Dendritic cell treated with granulocyte-macrophage colony-stimulating factor and Interleukin-4, amounts not matched to agents 40 ng/mL and 50 ng/mL, for 4 days (primary cell): ENCODE measurements at regions of chr10 and their contacts with region 1.

Region 1: DNA sequence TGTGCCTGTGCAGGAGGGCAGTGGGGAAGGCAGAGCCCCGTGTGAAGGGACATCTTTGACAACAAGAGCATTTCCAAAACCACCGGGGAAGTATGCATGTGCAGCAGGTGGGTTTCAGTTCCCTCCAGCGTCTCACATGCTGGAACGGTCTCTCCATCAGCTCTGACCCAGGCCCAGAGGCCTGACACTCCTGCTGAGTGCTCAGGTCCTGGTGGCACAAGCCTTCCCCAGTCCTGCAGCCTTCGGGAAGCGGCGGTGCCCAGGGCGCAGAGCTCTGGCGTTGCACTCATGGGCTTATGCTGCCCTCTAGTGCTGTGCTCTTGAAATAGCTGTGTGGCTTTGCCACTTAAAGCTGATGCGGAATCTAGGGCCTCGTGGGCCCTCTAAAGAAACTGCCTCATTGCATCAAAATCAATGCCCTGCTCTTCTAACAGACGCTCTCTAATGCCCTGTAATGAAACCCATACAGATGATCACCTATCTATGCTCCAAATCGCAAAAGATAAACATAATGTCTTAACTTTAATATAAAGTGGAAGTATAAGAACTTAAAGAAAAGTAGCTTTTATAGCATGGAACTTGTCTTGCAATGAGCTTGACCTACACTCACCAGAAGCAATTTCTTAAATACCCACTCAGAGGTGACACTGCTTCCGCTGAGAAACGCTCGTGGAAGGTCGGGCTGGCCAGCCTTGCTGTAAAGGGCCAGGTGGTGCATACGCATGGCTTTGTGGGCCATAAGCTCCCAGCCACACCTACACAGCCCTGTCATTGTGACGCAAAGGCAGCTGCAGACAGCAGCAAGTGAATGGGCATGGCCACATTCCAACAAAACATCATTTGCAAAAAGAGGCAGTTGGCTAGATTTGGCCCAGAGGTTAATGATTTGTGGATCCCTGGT is 38.6 kb downstream of the CLRN3 start:
- H3K4me3 Mint-ChIP-seq: no peak overlapping the region
- H3K27ac Mint-ChIP-seq: peak overlapping the region; percentile 63
- H3K4me1 Mint-ChIP-seq: peaks cover 31% of the 10 kb centered on the region
- H3K27me3 Mint-ChIP-seq: peaks cover 19% of the 10 kb centered on the region

Region 2: DNA sequence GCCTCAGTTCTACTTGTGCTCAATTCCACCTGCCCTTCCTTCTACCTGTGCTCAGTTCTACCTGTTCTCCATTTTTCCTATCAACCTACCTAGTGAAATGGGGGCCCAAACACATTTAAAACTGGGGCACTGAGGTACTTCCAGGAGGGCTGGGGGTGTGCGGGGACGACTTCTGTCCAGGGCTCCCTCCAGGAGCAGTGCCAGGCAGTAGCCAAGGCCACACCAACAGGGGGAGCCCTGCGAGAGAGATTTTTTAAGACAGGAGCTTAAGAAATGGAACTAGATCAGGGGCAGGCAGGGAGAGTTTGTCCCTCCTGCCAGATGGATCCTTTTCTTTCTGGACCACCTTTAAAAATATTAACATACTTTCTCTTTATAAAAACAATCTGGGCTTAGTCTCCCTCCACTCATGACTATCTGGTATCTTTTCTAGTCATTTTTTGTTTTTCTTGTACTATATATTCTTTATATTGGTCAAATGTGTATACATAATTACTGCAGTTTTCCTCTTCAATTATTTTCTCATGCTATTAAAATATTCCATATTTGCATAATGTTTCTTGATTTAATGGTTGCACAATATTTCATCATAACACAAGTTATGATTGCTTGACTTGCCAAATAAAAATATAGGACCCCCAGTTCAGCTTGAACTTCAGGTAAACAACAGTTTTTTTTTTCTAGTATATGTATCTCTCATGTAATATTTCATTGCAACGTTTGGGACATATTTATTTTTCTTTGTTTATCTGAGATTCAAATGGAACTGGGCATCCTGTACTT is 610.4 kb before region 1 on chr10:
- intact Hi-C with region 1: loop called (anchors 5 kb)
- H3K4me3 Mint-ChIP-seq: no peak overlapping the region
- H3K27ac Mint-ChIP-seq: no peak overlapping the region
- H3K4me1 Mint-ChIP-seq: no peaks in the 10 kb centered on the region
- H3K27me3 Mint-ChIP-seq: no peaks in the 10 kb centered on the region

Region 3: DNA sequence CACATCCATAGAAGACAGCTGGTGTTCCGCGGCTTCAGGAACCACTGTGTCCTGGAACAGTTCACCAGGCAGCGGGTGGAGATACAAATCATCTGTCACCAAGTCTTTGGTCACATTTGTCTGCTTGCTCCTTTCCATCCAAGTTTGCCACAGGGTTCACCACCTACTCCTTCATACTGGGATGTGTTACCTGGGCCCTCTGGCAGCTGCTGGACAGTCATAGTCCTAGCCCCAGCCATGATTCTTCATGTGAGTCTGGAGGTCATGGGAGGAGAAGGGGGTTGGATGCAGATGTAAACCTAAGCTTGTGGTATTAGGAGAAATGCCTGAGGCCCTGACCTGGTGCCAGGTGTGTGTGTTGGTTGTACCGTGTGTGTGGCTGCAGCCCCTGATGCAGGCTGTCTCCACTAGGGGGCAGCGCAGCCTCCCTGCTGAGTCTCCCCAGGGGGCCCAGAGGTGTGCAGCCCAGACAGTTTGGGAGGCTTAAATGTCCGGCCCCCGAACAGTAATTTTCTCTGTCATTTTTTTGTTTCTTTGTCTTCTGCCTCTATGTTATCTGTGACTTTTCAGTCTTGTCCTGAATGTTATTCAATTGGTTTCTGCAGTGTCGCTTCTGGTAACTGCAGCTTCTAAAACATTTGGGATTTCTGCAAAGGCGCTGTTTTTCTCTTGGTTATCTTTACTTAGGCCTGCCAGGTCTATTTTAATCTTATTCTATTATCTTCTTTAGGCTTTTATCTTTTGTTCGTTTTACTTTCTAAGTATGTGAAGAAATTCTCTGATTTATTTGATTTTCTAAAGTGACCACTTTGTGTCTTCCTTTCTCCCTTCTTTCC is 290.2 kb before region 1 on chr10:
- intact Hi-C with region 1: loop called (anchors 1 kb)
- H3K4me3 Mint-ChIP-seq: no peak overlapping the region
- H3K27ac Mint-ChIP-seq: no peak overlapping the region
- H3K4me1 Mint-ChIP-seq: no peaks in the 10 kb centered on the region
- H3K27me3 Mint-ChIP-seq: peaks cover 6% of the 10 kb centered on the region

Region 4: GRCh38 chr10:127715782-127716378 is 138.2 kb before region 1 on chr10:
- intact Hi-C with region 1: loop called (anchors 1 kb)
- H3K4me3 Mint-ChIP-seq: no peak overlapping the region
- H3K27ac Mint-ChIP-seq: no peak overlapping the region
- H3K4me1 Mint-ChIP-seq: no peaks in the 10 kb centered on the region
- H3K27me3 Mint-ChIP-seq: peaks cover 1% of the 10 kb centered on the region

Region 5: GRCh38 chr10:128419466-128420019 is 565.4 kb after region 1 on chr10:
- intact Hi-C with region 1: no loop called
- H3K4me3 Mint-ChIP-seq: no peak overlapping the region
- H3K27ac Mint-ChIP-seq: no peak overlapping the region
- H3K4me1 Mint-ChIP-seq: no peaks in the 10 kb centered on the region
- H3K27me3 Mint-ChIP-seq: no peaks in the 10 kb centered on the region